ENCODE measurements at regions of chr18 and their contacts with region 1.

Region 1: DNA sequence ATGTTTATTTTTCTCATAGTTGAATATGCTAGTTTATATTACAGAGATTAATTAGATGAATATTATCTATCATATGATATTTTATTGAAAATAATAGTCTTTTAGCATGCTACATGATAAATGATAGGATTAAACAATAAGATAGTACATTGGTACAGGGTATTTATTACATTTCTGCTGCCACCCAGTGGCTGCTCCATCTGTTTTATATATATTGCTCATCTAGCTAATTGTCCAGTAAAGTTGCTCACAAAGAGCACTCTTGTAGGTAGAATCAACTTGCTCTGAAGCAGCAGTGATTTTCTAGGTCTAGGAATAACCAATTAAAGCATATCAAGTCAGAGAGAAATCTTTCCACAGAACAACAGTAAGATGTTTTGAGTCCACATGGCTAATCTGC is 183.3 kb downstream of the ASXL3 start:
- DNase-seq: no peak
- ATAC-seq: no peak
- H3K4me3 ChIP-seq: no peak overlapping the region
- H3K4me3 Mint-ChIP-seq: no peak overlapping the region
- H3K27ac ChIP-seq: no peak overlapping the region
- H3K27ac Mint-ChIP-seq: no peak overlapping the region
- H3K4me1 ChIP-seq: no peaks in the 10 kb centered on the region
- H3K4me1 Mint-ChIP-seq: no peaks in the 10 kb centered on the region
- H3K27me3 ChIP-seq: no peaks in the 10 kb centered on the region
- H3K27me3 Mint-ChIP-seq: no peaks in the 10 kb centered on the region

Region 2: DNA sequence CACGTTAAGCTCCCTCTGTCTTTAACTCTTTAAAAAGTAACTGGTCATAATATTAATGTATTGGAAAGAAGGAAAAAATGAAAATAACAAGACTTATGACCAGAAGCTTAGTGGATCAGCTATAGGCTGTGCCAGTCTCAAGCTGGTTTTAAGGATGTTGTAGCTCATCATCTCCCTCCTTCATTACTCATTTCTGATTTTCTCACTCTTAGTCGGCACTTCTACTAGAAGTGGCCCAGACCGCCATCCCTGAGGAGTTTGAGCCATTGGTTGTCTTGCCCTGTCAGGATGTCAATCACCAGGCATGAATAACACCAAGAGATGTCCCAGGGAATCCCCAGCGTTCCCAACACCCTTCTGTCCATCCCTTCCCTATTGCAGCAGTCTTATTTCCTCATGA is 31.8 kb before region 1 on chr18:
- CTCF ChIA-PET with region 1: no interaction called
- POLR2A ChIA-PET with region 1: no interaction called
- intact Hi-C with region 1: no loop called
- DNase-seq: no peak
- ATAC-seq: no peak
- H3K4me3 ChIP-seq: no peak overlapping the region
- H3K4me3 Mint-ChIP-seq: no peak overlapping the region
- H3K27ac ChIP-seq: no peak overlapping the region
- H3K27ac Mint-ChIP-seq: no peak overlapping the region
- H3K4me1 ChIP-seq: no peaks in the 10 kb centered on the region
- H3K4me1 Mint-ChIP-seq: no peaks in the 10 kb centered on the region
- H3K27me3 ChIP-seq: no peaks in the 10 kb centered on the region
- H3K27me3 Mint-ChIP-seq: no peaks in the 10 kb centered on the region

Region 3: DNA sequence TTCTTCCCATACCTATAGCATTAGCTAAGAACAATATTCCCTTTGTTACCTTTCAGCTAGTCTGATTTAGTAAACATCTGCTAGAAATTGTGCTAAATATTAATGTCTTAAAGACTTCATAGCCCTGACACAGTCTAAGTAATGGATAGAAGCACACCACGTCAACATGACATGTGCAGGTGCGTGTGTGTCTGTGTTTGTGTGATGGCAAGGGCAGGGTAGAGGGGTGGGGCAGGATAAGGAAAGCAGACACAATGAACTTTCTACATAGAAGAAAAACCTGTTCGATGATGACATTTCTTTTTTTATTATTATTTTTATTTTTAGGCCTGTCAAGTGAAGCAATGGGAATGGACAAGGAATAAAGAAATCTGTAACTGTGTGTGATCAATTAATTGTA is 240.0 kb after region 1 on chr18:
- CTCF ChIA-PET with region 1: no interaction called
- POLR2A ChIA-PET with region 1: no interaction called
- intact Hi-C with region 1: loop called in 1 of 2 experiments (anchors 10 kb)
- DNase-seq: no peak
- ATAC-seq: no peak
- H3K4me3 ChIP-seq: no peak overlapping the region
- H3K4me3 Mint-ChIP-seq: no peak overlapping the region
- H3K27ac ChIP-seq: no peak overlapping the region
- H3K27ac Mint-ChIP-seq: no peak overlapping the region
- H3K4me1 ChIP-seq: no peaks in the 10 kb centered on the region
- H3K4me1 Mint-ChIP-seq: no peaks in the 10 kb centered on the region
- H3K27me3 ChIP-seq: no peaks in the 10 kb centered on the region
- H3K27me3 Mint-ChIP-seq: no peaks in the 10 kb centered on the region